Gastrocnemius medialis (tissue), 4 donors: ENCODE measurements at regions of chr1 and their contacts with region 1.

Region 1: DNA sequence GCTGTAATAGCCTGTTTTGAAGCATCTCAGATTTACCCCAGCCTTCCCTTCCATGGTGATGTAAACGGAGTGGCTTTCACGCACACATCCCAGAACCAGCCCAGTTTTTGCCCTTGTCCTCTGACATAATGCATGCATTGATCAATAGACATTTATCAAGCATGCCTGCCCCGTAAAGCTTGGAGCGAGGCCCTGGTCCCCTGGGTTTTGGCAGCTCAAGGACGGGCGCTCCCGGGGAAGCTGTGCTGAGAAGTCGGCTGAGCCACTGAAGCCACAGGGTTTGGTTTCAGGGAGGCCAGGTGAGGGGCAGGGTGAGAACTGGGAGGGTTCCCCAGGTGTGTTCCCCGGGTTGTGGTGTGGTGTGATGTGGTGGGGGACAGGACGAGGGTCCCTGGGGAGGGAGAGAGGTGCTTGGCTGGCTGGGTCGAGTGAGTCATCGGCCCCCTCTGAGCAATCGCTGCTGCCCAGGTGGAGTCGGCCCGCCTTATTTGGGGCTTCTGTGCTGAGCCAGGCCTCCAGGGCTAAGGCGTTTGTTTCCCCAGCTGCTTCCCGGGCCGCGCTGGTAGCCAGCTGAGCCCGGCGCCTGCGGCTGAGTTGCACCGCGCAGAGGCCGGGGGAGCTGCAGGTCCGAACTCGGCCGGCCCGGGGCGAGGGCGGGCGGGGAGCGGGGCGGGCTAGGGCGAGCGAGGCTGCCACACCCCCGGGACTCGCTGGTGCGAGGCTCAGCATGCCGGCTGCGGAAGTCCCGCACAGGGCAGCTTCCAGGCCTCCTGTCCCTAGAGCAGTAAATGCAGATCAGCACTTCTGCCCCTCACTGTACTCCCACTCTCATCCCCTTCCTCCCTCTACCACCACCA is 23.6 kb downstream of the ATP2B4 start:
- DNase-seq: no peak
- ATAC-seq: peak; percentile 32 to 53
- H3K4me3 ChIP-seq: peak overlapping the region; percentile 17 to 42 (median 32)
- H3K27ac ChIP-seq: peak overlapping the region; percentile 5 to 38 (median 28)
- H3K4me1 ChIP-seq: peaks cover 5 to 13% of the 10 kb centered on the region in 2 donors
- H3K27me3 ChIP-seq: no peaks in the 10 kb centered on the region
- CTCF ChIP-seq: no peak
- POLR2A ChIP-seq: no peak

Region 2: GRCh38 chr1:203663294-203663693 is 13.1 kb after region 1 on chr1:
- in situ Hi-C with region 1: no loop called
- intact Hi-C with region 1: loop called (anchors 2 kb)
- DNase-seq: peak; percentile 32 to 53
- ATAC-seq: peak; percentile 97 to 98
- H3K4me3 ChIP-seq: no peak overlapping the region
- H3K27ac ChIP-seq: peak overlapping the region; percentile 65 to 76 (median 72)
- H3K4me1 ChIP-seq: peaks cover 51 to 52% of the 10 kb centered on the region in 2 donors
- H3K27me3 ChIP-seq: no peaks in the 10 kb centered on the region
- CTCF ChIP-seq: peak in 1 of 5 experiments; percentile 11
- POLR2A ChIP-seq: no peak

Region 3: GRCh38 chr1:203673550-203674427 is 23.6 kb after region 1 on chr1:
- in situ Hi-C with region 1: no loop called
- intact Hi-C with region 1: no loop called
- DNase-seq: peak in 1 of 2 donors; percentile 53
- ATAC-seq: peak; percentile 61 to 75
- H3K4me3 ChIP-seq: no peak overlapping the region
- H3K27ac ChIP-seq: peak overlapping the region; percentile 64 to 82 (median 70)
- H3K4me1 ChIP-seq: peaks cover 38 to 45% of the 10 kb centered on the region in 2 donors
- H3K27me3 ChIP-seq: no peaks in the 10 kb centered on the region
- CTCF ChIP-seq: peak in 1 of 5 experiments; percentile 14
- POLR2A ChIP-seq: no peak